Mammary epithelial cell (primary cell): ENCODE measurements at regions of chrX and their contacts with region 1.

Region 1: GRCh38 chrX:5145965-5146364 is 1082.7 kb downstream of the NLGN4X start:
- DNase-seq: no peak
- H3K4me3 ChIP-seq: no peak overlapping the region
- H3K27ac ChIP-seq: no peak overlapping the region
- H3K4me1 ChIP-seq: no peaks in the 10 kb centered on the region
- H3K27me3 ChIP-seq: no peaks in the 10 kb centered on the region
- CTCF ChIP-seq: no peak

Region 2: GRCh38 chrX:5084279-5084678 is 61.7 kb before region 1 on chrX:
- CTCF ChIA-PET with region 1: no interaction called
- dilution Hi-C with region 1: no loop called
- in situ Hi-C with region 1: loop called in 1 of 2 experiments (anchors 10 kb)
- intact Hi-C with region 1: no loop called
- DNase-seq: no peak
- H3K4me3 ChIP-seq: no peak overlapping the region
- H3K27ac ChIP-seq: no peak overlapping the region
- H3K4me1 ChIP-seq: no peaks in the 10 kb centered on the region
- H3K27me3 ChIP-seq: no peaks in the 10 kb centered on the region
- CTCF ChIP-seq: no peak